ENCODE measurements at regions of chr1 and their contacts with region 1.

Region 1: DNA sequence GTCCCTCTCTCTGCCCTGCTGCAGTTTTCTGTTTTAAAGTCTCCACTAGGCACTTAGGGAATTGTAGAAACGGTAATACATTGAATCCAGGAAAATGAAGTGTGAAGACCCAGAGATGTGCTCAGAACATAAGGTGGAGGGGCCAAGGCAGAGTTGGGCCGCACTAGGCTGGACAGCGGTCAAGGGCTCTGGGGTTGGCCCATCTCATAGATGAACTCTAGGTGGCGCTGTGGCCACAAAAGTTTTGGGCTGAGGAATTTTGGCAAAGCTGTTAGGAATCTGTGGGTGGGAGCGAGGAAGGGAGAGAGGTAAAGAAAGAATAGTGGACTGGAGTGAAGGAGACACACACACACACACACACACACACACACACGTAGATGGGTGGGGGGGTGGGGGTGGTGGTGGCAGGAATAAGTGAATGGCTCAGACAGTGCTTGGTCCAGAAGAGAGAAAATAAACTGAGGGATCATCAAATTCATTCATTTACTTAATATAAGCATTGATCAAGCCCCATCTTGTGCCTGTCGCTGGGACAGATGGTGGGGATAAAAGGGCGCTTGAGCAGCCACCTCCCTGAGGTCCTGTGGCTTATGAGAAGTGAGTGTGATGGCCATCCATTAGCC is 258.5 kb downstream of the TRABD2B start:
- DNase-seq: no peak
- H3K4me3 ChIP-seq: no peak overlapping the region
- H3K27me3 ChIP-seq: no peaks in the 10 kb centered on the region; the same call in 1 of the 2 replicates
- CTCF ChIP-seq: peak; percentile 72

Region 2: GRCh38 chr1:47624531-47624930 is 114.1 kb before region 1 on chr1:
- CTCF ChIA-PET with region 1: no interaction called
- POLR2A ChIA-PET with region 1: no interaction called
- DNase-seq: no peak
- H3K4me3 ChIP-seq: no peak overlapping the region
- H3K27me3 ChIP-seq: no peaks in the 10 kb centered on the region
- CTCF ChIP-seq: 0 out of 2 replicates have a peak, but pooled peaks have one; percentile 12

Region 3: DNA sequence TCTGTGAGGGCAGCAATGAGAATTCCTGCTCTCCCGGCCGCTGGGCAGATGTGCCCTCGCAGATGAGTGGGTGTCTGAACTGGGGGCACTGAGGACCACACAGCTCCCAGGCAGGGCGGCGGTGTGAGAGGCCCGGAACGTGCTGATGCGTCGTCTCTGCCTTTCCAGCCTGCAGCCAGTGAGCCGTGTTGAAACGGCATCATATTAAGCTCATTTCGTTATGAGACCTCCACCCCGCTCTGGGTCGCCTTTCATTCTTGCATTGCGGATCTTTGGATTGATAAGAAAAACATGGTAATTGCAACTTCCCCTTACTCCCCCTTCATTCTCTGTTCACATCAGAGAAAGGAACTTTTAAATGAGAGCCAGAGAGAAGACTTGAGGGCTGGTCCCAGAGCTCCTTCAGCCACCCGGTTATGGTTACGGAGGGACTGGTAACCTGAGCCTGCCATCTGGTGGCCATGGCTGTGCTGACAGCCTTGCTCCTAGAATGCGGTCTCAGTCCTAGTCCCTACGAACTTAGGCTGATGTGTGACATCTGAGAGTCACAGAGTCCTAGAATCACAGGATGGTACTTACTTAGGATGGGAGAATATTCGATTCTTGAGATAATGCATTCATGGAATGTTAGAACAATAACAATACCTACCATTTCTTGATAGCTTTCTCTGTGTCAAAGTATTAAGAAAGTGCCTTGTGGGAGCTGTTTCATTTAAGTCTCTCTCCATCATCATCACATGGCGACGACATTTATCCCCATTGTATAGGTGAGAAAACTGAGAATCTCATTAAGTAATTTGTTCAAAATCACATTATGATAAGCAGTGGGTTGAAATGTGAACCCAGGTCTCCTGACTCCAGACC is 12.4 kb before region 1 on chr1:
- CTCF ChIA-PET with region 1: interaction called, 13 read pairs
- POLR2A ChIA-PET with region 1: no interaction called
- DNase-seq: no peak
- H3K4me3 ChIP-seq: no peak overlapping the region
- H3K27me3 ChIP-seq: peaks cover 15% of the 10 kb centered on the region
- CTCF ChIP-seq: peak; percentile 95

Region 4: GRCh38 chr1:47866601-47867437 is 128.1 kb after region 1 on chr1:
- CTCF ChIA-PET with region 1: no interaction called
- POLR2A ChIA-PET with region 1: no interaction called
- DNase-seq: no peak
- H3K4me3 ChIP-seq: no peak overlapping the region
- H3K27me3 ChIP-seq: no peaks in the 10 kb centered on the region
- CTCF ChIP-seq: no peak